Natural killer cell (primary cell): ENCODE measurements at regions of chr10 and their contacts with region 1.

Region 1: DNA sequence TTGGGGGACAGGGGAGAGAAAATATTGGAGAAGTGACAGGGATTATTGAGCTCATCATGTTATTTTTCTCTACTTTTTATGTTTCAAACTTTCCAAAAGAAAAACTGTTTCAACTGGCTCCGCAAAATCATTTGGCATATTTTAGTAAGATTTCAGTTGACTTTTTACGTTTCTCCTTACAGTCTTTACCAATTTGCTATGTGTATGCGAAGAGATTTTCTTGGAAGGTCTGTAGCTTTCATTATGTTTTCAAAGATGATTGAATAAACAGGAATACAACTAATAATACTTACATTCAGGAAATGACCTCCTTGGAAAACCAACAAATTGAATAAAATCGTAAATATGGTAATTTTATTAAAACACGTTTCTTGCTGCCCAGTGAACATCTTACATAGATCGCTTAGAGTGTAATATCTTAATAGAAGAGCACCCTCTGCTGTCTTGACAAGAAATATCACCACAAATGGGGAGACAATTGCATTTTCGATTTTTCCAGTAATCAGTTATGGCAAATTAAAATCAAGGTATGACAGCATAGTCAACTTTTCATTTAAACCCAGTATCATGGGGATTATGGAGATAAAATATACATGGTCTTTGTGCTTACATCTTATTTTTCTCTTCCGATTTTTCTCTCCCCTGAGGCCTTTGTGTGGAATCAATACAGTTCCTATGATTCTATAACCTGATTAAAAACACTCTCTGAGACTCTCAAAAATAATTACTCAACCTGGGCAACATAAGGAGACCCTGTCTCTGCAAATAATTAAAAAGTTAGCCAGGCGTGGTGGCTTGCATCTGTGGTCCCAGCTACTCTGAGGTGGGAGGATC is 43.1 kb downstream of the MBL2 start:
- DNase-seq: no peak
- ATAC-seq: no peak
- H3K4me3 ChIP-seq: no peak overlapping the region
- H3K4me3 Mint-ChIP-seq: no peak overlapping the region
- H3K27ac ChIP-seq: no peak overlapping the region
- H3K27ac Mint-ChIP-seq: no peak overlapping the region
- H3K4me1 ChIP-seq: no peaks in the 10 kb centered on the region
- H3K4me1 Mint-ChIP-seq: no peaks in the 10 kb centered on the region
- H3K27me3 ChIP-seq: no peaks in the 10 kb centered on the region
- H3K27me3 Mint-ChIP-seq: no peaks in the 10 kb centered on the region
- CTCF ChIP-seq: peak; percentile 28

Region 2: DNA sequence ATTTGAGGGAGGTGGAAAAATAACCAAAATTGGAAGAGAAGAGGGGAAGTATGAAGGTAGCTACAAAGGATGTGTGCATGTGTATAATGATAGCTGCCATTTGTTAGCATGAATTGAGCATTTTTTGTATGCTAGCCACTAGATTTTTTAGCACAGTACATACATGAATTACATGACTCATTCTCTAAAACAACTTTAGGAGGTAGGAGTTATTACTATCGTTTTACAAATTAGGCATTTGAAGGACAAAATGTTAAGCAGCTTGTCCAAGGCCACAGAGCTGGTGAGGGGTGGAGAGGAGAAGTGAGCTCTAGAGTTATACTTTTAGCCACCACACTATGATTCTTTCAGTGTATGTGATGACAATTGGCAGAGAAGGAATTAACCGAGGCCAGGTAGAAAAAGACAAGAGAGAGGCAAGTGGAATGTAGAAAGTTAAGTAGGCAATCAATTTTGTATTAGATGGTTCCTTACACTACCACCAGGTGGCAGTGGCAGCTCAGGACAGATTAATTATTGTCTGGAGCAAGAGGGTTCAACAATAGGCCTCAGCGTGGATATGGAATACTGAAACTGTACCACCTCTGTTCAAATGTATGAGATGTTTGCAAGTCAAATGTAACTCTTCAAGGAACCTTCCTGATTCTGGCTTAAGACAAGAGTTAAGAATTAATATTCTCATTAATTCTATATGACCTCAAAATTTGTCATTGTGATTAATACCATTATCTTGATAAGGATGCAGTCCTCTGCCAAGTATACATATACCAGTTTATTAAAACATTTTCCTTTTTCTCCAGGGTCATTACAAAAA is 84.9 kb before region 1 on chr10:
- intact Hi-C with region 1: loop called (anchors 1 kb)
- DNase-seq: peak in 1 of 2 donors; percentile 1
- ATAC-seq: no peak
- H3K4me3 ChIP-seq: no peak overlapping the region
- H3K4me3 Mint-ChIP-seq: no peak overlapping the region
- H3K27ac ChIP-seq: no peak overlapping the region
- H3K27ac Mint-ChIP-seq: no peak overlapping the region
- H3K4me1 ChIP-seq: no peaks in the 10 kb centered on the region
- H3K4me1 Mint-ChIP-seq: peaks cover 6 to 15% of the 10 kb centered on the region in 2 donors
- H3K27me3 ChIP-seq: no peaks in the 10 kb centered on the region
- H3K27me3 Mint-ChIP-seq: no peaks in the 10 kb centered on the region
- CTCF ChIP-seq: peak; percentile 59

Region 3: DNA sequence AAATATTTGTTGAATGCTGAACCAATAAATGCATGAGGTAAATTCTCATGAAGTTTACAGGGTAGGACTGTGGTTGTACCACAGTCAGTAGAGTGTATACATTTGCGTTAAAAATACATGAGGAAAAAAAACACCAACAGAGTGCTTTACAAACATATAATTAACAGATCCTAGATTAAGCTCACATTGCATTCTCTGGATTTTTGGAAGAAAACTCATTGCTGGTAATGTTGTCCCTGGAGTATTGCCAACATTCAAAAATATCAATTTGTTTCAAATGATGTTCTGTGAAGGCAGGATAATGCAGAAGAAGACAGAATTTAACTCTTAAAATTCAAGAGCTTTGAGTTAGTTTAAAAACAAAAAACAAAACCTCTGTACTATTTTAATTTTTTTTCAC is 52.4 kb before region 1 on chr10:
- intact Hi-C with region 1: no loop called
- DNase-seq: no peak
- ATAC-seq: no peak
- H3K4me3 ChIP-seq: no peak overlapping the region
- H3K4me3 Mint-ChIP-seq: no peak overlapping the region
- H3K27ac ChIP-seq: no peak overlapping the region
- H3K27ac Mint-ChIP-seq: no peak overlapping the region
- H3K4me1 ChIP-seq: no peaks in the 10 kb centered on the region
- H3K4me1 Mint-ChIP-seq: no peaks in the 10 kb centered on the region
- H3K27me3 ChIP-seq: no peaks in the 10 kb centered on the region
- H3K27me3 Mint-ChIP-seq: no peaks in the 10 kb centered on the region
- CTCF ChIP-seq: no peak

Region 4: DNA sequence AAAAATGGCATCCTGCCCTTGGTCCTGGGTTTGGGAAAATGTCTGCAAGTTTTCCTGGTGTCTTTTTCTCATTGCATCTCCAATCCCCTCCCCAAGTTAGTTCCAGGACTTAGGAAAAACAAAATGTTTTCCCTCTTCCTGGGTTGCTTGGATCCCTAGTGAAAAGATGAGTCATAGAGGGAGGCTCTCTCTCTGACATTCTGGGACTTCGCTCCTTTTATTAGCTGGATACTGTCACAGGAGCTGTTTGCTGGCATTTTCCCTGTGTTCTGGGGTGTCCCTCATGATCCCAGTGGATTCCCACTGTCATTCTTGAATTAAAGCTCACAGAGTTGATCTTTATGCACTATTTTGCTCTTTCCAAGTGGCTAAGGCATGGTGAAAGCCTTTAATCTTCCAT is 359.5 kb after region 1 on chr10:
- intact Hi-C with region 1: no loop called
- DNase-seq: no peak
- ATAC-seq: no peak
- H3K4me3 ChIP-seq: no peak overlapping the region
- H3K4me3 Mint-ChIP-seq: no peak overlapping the region
- H3K27ac ChIP-seq: no peak overlapping the region
- H3K27ac Mint-ChIP-seq: no peak overlapping the region
- H3K4me1 ChIP-seq: no peaks in the 10 kb centered on the region
- H3K4me1 Mint-ChIP-seq: no peaks in the 10 kb centered on the region
- H3K27me3 ChIP-seq: no peaks in the 10 kb centered on the region
- H3K27me3 Mint-ChIP-seq: no peaks in the 10 kb centered on the region
- CTCF ChIP-seq: no peak